Common myeloid progenitor, CD34-positive (primary cell): ENCODE measurements at regions of chr2 and their contacts with region 1.

Region 1: DNA sequence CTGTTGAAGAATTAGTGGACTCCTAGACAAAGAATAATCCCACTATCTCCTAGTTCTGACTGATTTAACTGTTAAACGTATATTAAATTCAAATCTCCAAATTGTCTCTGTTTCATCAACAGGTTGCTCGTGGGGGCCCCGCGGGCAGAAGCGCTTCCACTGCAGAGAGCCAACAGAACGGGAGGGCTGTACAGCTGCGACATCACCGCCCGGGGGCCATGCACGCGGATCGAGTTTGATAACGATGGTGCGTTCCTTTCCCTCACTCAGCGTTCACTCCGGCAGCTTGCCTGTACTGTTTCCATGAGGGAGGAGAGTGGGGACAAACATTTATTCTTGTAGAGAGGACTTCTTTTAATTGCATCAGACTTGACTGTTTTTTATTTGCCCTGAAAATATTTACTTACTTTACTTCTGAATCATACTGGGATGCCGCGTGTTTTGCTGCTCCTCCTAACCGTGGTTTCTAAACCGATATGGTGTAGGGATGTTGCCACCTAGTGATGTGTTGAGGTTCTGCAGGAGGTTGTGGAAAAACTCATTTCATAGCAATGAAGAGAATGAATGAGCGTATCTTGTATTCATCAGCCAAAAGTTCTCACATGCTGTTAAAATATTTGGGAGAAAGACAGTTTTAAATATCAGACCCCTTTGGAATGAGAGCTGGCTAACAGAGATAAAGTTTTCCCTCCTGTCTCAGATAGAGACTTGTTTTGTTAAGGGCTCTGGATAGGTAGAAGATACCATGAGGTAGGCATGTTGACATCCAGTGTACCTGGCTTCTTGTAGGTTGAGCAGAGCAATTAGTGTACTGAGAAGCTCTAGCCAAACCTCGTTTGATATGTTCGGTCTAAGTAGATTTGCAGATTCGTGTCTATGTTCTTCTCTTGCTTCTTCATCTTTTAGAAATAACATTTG is 38.3 kb downstream of the ITGA6 start:
- DNase-seq: peak; percentile 75 to 89 (median 85)
- H3K4me3 ChIP-seq: no peak overlapping the region
- H3K27ac ChIP-seq: no peak overlapping the region
- H3K4me1 ChIP-seq: peaks cover 29 to 51% (median 42%) of the 10 kb centered on the region in 4 experiments
- H3K27me3 ChIP-seq: no peaks in the 10 kb centered on the region

Region 2: DNA sequence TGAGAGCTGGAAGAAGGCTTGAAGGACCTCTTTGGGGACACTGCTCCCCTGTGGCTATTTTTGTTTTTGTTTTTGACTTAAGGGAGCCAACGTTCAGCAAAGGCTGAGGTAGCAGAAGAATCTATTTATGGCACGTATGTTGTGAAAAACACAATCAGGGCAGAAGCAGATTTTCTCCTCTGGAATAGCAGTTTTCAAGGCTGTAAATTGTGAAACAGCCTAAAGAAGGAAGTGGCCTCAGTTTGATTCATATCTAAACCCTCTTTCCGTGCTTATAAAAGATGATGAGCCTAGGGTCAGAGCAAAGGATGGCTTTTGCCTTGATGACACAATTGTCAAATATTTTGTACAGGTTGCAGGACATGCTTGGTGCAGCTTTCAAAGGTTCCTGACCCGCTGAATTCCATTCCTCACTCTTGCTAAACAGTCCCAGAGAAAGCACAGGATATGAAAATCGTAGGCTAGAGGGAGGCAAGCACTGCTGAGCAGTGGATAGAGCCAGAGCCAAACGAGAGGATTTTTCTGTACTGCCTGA is 256.8 kb before region 1 on chr2:
- CTCF ChIA-PET with region 1: interaction called, 15 read pairs
- POLR2A ChIA-PET with region 1: no interaction called
- DNase-seq: peak in 2 of 3 donors; percentile 52 to 60
- H3K4me3 ChIP-seq: peak overlapping the region in 1 of 7 experiments; percentile 29
- H3K27ac ChIP-seq: no peak overlapping the region
- H3K4me1 ChIP-seq: peaks cover 0 to 35% (median 26%) of the 10 kb centered on the region in 4 experiments
- H3K27me3 ChIP-seq: no peaks in the 10 kb centered on the region

Region 3: DNA sequence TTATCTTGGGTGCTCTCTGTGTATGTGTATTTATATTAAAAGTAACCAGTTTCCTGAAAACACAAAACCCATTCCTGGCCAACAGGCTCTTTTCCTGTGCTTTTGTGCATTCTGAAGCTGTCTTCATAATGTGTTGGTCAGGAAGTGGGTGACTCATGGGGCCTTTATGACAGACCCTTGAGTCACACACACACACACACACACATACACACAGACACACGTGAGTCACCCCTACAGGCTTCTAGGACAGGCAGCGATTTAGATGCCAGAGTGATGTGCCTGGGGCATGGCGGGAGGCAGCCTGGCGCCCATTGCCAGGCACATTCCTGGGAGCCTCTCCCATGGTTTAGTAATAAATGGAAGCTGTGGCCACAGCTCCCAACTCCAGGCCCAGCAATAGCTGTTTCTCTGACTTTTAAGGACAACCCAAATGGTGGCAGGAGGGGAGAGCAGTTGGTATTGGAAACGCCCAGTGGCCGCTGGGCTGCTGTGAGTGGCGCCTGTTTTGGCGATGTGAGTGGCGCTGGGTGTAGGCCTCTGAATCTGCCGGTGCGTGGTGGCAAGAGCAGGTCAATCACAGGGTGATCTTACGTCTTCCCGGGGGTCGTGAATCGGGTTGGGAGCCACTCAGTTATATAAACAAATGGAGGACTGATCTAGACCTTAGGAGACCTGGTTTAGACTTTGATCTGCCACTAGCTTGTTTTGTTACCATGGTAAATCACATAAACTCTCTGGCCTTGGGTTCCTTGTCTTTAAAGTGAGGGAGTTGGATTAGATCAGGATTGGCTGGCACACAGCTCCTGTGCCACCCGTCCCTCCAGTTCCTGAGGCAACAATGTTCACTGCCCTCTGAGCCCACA is 212.3 kb before region 1 on chr2:
- CTCF ChIA-PET with region 1: interaction called, 10 read pairs
- POLR2A ChIA-PET with region 1: no interaction called
- DNase-seq: peak; percentile 97 to 99 (median 99)
- H3K4me3 ChIP-seq: peak overlapping the region in 2 of 7 experiments; percentile 0 to 19
- H3K27ac ChIP-seq: peak overlapping the region; percentile 40 to 44
- H3K4me1 ChIP-seq: peaks cover 5 to 51% (median 46%) of the 10 kb centered on the region in 4 experiments
- H3K27me3 ChIP-seq: no peaks in the 10 kb centered on the region

Region 4: DNA sequence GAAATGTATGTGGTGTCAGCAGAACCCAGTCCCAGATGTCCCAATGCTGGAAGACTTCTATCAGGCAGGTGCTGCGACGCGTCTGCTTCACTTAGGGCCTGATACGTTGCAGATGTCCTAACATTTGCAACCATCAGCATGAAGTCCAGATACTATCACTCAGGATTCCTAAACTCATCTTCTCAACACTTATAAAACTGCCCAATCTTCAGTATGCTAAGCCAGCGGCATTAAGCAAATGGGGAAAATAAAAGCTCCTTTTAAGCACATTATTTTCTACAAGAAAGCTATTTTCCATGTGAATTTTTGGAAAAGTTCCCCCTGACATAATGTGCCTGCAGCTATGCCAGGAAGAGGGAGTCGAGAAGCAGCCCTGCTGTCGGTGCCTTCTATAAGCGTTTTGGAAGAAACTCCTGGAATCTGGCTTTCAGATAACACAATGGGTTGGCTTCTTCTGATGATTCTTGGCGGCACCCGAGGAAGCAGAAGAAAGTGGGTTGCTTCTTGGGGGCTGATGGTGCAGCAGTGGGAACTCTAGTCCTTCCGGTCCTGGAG is 99.0 kb before region 1 on chr2:
- CTCF ChIA-PET with region 1: interaction called, 11 read pairs
- POLR2A ChIA-PET with region 1: no interaction called
- DNase-seq: no peak
- H3K4me3 ChIP-seq: no peak overlapping the region
- H3K27ac ChIP-seq: no peak overlapping the region
- H3K4me1 ChIP-seq: no peaks in the 10 kb centered on the region
- H3K27me3 ChIP-seq: no peaks in the 10 kb centered on the region

Region 5: GRCh38 chr2:172427256-172427989 is 38.3 kb before region 1 on chr2 and contains the start of gene ITGA6:
- CTCF ChIA-PET with region 1: interaction called, 515 read pairs
- POLR2A ChIA-PET with region 1: interaction called, 3 read pairs
- DNase-seq: peak; percentile 77 to 87 (median 79)
- H3K4me3 ChIP-seq: peak within 1 kb of the TSS; percentile 73 to 89 (median 83)
- H3K27ac ChIP-seq: peak within 1 kb of the TSS in 1 of 2 experiments; percentile 9
- H3K4me1 ChIP-seq: peaks cover 22 to 49% (median 42%) of the 10 kb centered on the region in 4 experiments
- H3K27me3 ChIP-seq: no peaks in the 10 kb centered on the region